ENCODE measurements at regions of chr16 and their contacts with region 1.

Region 1: DNA sequence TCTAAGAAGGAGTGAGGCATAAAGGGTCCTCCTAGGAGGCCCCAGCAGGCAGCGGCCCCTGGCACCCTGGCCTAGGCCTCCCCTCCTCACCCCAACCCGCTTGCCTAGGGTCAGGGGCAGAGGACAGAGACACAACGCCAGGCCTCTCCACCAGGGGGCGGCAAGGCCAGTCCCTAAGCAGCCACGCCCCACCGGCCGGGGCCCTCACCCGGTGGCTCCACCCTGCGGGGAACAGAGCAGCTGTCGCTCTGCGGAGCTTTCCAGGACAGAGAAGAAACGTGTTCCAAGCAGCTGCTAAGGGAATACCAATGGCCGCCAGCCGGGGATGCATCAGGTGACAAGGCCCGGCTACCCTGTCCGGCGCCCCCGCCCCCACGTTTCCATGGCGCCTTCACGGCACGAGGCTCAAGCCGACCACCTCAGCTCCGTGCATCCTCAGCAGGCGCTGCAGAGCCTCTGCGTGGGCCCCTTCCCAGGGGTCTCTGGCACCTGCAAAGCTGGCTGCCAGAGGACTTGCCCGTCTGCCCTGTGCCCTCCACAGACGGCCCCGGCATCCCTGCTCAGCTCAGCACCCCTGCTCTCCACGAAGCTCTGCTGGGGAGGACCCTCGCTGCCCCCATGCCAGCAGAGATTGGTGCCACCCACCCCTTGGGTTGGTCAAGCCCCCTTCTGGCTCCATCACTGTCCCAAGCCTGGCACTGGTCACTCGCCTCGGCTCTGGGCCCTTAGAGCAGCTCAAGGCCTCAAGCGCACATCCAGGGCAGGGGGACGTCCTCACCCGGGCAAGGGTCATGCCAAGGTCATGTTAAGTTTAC is 5.6 kb downstream of the ZNF598 start:
- DNase-seq: peak; percentile 85
- H3K4me3 Mint-ChIP-seq: no peak overlapping the region
- H3K27ac Mint-ChIP-seq: peak overlapping the region; percentile 59
- H3K4me1 Mint-ChIP-seq: peaks cover 17% of the 10 kb centered on the region
- H3K27me3 Mint-ChIP-seq: no peaks in the 10 kb centered on the region
- CTCF ChIP-seq: peak; percentile 92

Region 2: GRCh38 chr16:1752853-1753252 is 251.2 kb before region 1 on chr16:
- CTCF ChIA-PET with region 1: no interaction called
- POLR2A ChIA-PET with region 1: no interaction called
- intact Hi-C with region 1: no loop called
- DNase-seq: no peak
- H3K4me3 Mint-ChIP-seq: no peak overlapping the region
- H3K27ac Mint-ChIP-seq: no peak overlapping the region
- H3K4me1 Mint-ChIP-seq: peaks cover 12% of the 10 kb centered on the region
- H3K27me3 Mint-ChIP-seq: no peaks in the 10 kb centered on the region
- CTCF ChIP-seq: no peak

Region 3: GRCh38 chr16:2016407-2016922 is 12.4 kb after region 1 on chr16:
- CTCF ChIA-PET with region 1: interaction called, 11 read pairs
- POLR2A ChIA-PET with region 1: interaction called, 9 read pairs
- intact Hi-C with region 1: no loop called
- DNase-seq: no peak
- H3K4me3 Mint-ChIP-seq: peak overlapping the region; percentile 47
- H3K27ac Mint-ChIP-seq: peak overlapping the region; percentile 96
- H3K4me1 Mint-ChIP-seq: peaks cover 6% of the 10 kb centered on the region
- H3K27me3 Mint-ChIP-seq: no peaks in the 10 kb centered on the region
- CTCF ChIP-seq: peak; percentile 39

Region 4: DNA sequence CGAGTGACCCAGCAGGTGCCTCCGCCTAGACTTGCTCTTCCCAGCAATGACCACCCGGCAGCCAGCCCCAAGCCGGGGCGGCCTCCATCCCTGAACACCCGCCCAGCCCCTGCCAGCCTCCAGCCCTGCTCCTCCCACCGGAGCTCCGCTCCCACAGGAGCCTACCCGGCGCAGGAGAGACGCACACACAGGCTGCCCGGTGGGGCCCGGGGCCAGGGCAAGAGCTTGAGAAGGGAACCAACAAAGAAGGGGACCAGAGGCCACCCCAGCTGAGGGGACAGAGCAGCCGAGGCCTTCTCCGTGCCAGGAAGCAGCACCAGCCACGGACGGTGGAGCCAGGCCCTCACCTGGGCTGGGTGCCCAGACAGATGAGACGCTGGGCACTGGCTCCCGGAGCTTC is 117.8 kb after region 1 on chr16:
- CTCF ChIA-PET with region 1: interaction called, 11 read pairs
- POLR2A ChIA-PET with region 1: interaction called, 7 read pairs
- intact Hi-C with region 1: no loop called
- DNase-seq: no peak
- H3K4me3 Mint-ChIP-seq: peak overlapping the region; percentile 47
- H3K27ac Mint-ChIP-seq: no peak overlapping the region
- H3K4me1 Mint-ChIP-seq: peaks cover 20% of the 10 kb centered on the region
- H3K27me3 Mint-ChIP-seq: no peaks in the 10 kb centered on the region
- CTCF ChIP-seq: no peak